ENCODE measurements at regions of chr15 and their contacts with region 1.

Region 1: DNA sequence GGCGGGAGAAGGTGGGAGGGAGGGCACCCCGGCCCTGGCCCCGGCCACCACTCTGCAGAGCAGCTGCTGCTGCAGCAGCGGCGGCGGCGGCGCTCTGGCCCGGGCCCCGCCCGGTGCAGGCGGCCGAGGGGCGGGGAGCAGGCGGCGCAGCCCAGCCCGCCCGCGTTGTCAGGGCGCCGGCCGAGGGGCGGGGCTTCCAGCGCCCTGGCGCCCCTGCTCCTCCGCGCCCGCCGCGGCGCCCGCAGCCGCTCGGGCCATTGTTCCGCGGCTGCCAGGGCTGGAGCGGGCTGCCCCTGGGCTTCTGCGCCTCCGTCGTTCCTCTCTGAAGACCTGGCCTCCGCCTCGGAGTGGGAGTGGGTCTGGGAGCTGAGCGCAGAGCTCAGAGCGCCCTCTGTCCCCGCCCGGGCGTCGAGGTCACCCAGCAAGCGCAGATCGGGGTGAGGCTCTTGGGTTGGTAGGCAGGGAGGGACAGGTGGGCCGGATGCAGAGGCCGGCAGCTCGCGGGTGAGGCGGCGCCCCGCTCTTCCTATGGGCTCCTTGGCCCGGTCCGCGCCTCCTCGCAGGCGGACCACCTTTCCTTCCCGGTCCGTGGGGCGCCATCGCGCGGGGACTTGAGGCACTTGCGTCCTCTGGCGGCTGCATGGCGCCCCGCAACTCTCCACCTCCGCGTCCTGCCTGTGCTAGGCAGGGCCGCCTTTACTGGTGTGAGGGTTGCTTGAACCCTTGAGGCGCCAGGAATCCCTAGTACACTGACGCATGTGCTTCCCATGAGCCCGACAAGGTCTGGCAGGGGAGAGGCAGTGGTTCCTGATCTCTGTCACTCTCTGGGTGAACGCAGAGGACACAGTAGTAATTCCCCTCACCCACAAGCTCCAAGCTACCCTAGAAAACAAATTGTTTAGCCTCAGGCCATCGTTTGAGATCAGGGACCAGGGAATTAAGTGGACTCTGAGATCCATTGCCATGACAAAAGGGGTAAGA is at the start of gene LPCAT4:
- DNase-seq: peak; percentile 89 to 93 (median 92)
- H3K4me3 ChIP-seq: peak within 1 kb of the TSS; percentile 86 to 94
- H3K4me3 Mint-ChIP-seq: peak within 1 kb of the TSS; percentile 94 to 99 (median 97)
- H3K27ac ChIP-seq: peak within 1 kb of the TSS; percentile 87
- H3K27ac Mint-ChIP-seq: peak within 1 kb of the TSS; percentile 94 to 97 (median 96)
- H3K4me1 ChIP-seq: peaks cover 31% of the 10 kb centered on the region
- H3K4me1 Mint-ChIP-seq: peaks cover 27 to 57% (median 38%) of the 10 kb centered on the region in 4 donors
- H3K27me3 ChIP-seq: no peaks in the 10 kb centered on the region
- H3K27me3 Mint-ChIP-seq: no peaks in the 10 kb centered on the region
- total RNA-seq, gene LPCAT4: 100 to 108 TPM

Region 2: GRCh38 chr15:34101366-34102175 is 265.8 kb before region 1 on chr15 and contains the starts of genes EMC7 and PGBD4:
- CTCF ChIA-PET with region 1: interaction called, 5 read pairs
- POLR2A ChIA-PET with region 1: interaction called, 18 read pairs
- intact Hi-C with region 1: loop called (anchors 1 kb)
- DNase-seq: peak; percentile 99 to 100 (median 99)
- H3K4me3 ChIP-seq: peak within 1 kb of the TSS; percentile 94 to 97
- H3K4me3 Mint-ChIP-seq: peak within 1 kb of the TSS; percentile 92 to 100 (median 100)
- H3K27ac ChIP-seq: peak within 1 kb of the TSS; percentile 85
- H3K27ac Mint-ChIP-seq: peak within 1 kb of the TSS; percentile 94 to 100 (median 99)
- H3K4me1 ChIP-seq: peaks cover 37% of the 10 kb centered on the region
- H3K4me1 Mint-ChIP-seq: peaks cover 16 to 52% (median 36%) of the 10 kb centered on the region in 4 donors
- H3K27me3 ChIP-seq: no peaks in the 10 kb centered on the region
- H3K27me3 Mint-ChIP-seq: peaks cover 0 to 1% of the 10 kb centered on the region in 2 donors
- total RNA-seq, gene EMC7: 38.3 to 47.8 TPM
- total RNA-seq, gene PGBD4: 4.7 to 4.9 TPM

Region 3: GRCh38 chr15:34223904-34224596 is 143.3 kb before region 1 on chr15:
- CTCF ChIA-PET with region 1: interaction called, 3 read pairs
- POLR2A ChIA-PET with region 1: interaction called, 14 read pairs
- intact Hi-C with region 1: no loop called
- DNase-seq: no peak
- H3K4me3 ChIP-seq: peak overlapping the region; percentile 88 to 93
- H3K4me3 Mint-ChIP-seq: peak overlapping the region; percentile 90 to 99 (median 96)
- H3K27ac ChIP-seq: peak overlapping the region; percentile 89
- H3K27ac Mint-ChIP-seq: peak overlapping the region; percentile 92 to 100 (median 99)
- H3K4me1 ChIP-seq: peaks cover 25% of the 10 kb centered on the region
- H3K4me1 Mint-ChIP-seq: peaks cover 21 to 32% (median 25%) of the 10 kb centered on the region in 4 donors
- H3K27me3 ChIP-seq: no peaks in the 10 kb centered on the region
- H3K27me3 Mint-ChIP-seq: peaks cover 3% of the 10 kb centered on the region in 2 donors

Region 4: DNA sequence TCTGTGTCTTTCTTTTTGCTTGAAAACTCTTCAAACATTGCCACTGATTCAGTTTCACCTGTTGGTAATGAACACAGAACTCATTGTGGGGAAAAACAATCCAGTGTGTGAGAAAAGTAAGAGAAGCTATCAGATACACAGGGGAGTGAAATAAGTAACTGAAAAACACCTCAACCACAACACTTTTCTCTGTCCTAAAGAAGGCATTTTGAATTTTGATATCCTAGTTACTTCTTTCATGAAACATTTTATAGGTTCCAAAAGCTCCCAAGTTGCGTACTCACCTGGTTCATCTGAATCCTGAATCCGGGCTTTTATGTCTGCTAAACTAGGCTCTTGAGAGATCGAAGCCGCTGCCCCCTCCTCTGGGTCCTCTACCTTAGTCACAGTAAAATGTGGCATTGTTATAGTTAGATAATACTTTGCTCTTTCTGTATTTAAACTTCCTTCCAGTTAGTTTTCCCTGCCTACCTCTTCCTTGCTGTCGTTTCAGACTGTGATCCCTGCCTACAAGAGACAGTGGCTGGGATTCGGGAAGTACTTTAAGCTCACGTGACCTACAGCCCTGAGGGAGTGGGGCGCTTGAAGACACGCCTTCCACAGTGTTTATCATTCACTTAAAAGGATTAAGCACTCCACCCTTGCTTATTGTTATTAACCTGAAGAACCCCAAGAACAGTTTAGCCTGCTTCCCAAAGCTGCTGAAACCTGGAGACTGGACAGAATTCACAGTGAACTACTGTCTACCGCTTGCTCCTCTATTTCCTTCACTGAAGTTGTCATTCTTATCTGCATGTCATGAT is 48.9 kb before region 1 on chr15:
- CTCF ChIA-PET with region 1: interaction called, 4 read pairs
- POLR2A ChIA-PET with region 1: interaction called, 12 read pairs
- intact Hi-C with region 1: no loop called
- DNase-seq: peak in 4 of 5 donors; percentile 12 to 50 (median 22)
- H3K4me3 ChIP-seq: peak overlapping the region; percentile 52 to 55
- H3K4me3 Mint-ChIP-seq: peak overlapping the region; percentile 93 to 99 (median 98)
- H3K27ac ChIP-seq: peak overlapping the region; percentile 49
- H3K27ac Mint-ChIP-seq: peak overlapping the region; percentile 65 to 96 (median 94)
- H3K4me1 ChIP-seq: peaks cover 31% of the 10 kb centered on the region
- H3K4me1 Mint-ChIP-seq: peaks cover 31 to 45% (median 38%) of the 10 kb centered on the region in 4 donors
- H3K27me3 ChIP-seq: no peaks in the 10 kb centered on the region
- H3K27me3 Mint-ChIP-seq: no peaks in the 10 kb centered on the region

Region 5: DNA sequence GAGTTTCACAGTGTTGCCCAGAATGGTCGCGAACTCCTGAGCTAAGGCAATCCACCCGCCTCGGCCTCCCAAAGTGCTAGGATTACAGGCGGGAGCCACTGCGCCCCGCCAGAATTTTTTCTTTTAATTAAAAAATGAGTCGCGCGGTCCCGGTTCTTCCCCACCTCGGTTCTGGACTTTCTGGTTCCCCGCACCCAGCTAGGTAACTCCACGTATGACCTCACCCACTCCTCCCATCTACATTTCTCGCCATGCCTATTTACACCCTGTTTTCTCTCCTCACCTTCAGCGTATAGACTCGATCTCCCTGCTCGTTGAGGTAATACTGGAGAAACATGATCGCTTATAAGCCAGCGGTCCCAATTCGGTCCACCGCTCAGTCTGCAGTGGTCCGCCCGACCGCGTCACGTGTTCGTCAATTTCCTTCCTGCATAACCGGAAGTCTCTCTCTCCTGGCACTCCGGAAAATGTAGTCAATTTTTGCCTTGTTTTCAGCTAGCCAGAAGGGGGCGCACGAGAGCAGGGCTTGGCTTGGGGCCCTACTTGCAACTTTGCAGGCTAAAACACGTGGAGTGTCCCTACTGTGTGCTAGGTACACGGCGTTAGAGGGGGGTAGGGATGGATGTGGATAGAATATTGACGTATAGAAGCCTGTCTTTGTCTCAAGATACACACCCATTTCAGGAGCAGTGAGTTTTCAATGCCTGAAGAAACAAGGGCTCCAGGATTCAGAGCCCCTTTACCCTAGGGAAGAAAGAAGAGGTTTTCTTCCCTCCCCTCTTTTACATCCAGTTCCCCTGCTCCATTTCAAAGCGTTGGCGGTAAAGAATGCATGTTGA is 24.4 kb before region 1 on chr15 and contains the starts of genes NOP10 and NUTM1:
- CTCF ChIA-PET with region 1: interaction called, 111 read pairs
- POLR2A ChIA-PET with region 1: interaction called, 144 read pairs
- intact Hi-C with region 1: loop called (anchors 1 kb)
- DNase-seq: peak; percentile 91 to 93 (median 92)
- H3K4me3 ChIP-seq: peak within 1 kb of the TSS; percentile 54 to 96
- H3K4me3 Mint-ChIP-seq: peak within 1 kb of the TSS in 2 of 8 donors; percentile 87
- H3K27ac ChIP-seq: peak within 1 kb of the TSS; percentile 73
- H3K27ac Mint-ChIP-seq: peak within 1 kb of the TSS in 5 of 7 donors; percentile 77 to 93 (median 88)
- H3K4me1 ChIP-seq: peaks cover 28% of the 10 kb centered on the region
- H3K4me1 Mint-ChIP-seq: peaks cover 14 to 31% (median 17%) of the 10 kb centered on the region in 4 donors
- H3K27me3 ChIP-seq: no peaks in the 10 kb centered on the region
- H3K27me3 Mint-ChIP-seq: no peaks in the 10 kb centered on the region
- total RNA-seq, gene NOP10: 73.5 to 77.2 TPM
- total RNA-seq, gene NUTM1: not detected

Region 6: GRCh38 chr15:34987985-34988873 is 620.8 kb after region 1 on chr15 and contains the start of gene ZNF770:
- CTCF ChIA-PET with region 1: no interaction called
- POLR2A ChIA-PET with region 1: interaction called, 10 read pairs
- intact Hi-C with region 1: loop called (anchors 10 kb)
- DNase-seq: peak; percentile 76 to 88 (median 85)
- H3K4me3 ChIP-seq: peak within 1 kb of the TSS; percentile 97 to 100
- H3K4me3 Mint-ChIP-seq: peak within 1 kb of the TSS; percentile 94 to 100 (median 98)
- H3K27ac ChIP-seq: peak within 1 kb of the TSS; percentile 96
- H3K27ac Mint-ChIP-seq: peak within 1 kb of the TSS; percentile 98 to 100 (median 99)
- H3K4me1 ChIP-seq: peaks cover 47% of the 10 kb centered on the region
- H3K4me1 Mint-ChIP-seq: peaks cover 29 to 54% (median 38%) of the 10 kb centered on the region in 4 donors
- H3K27me3 ChIP-seq: no peaks in the 10 kb centered on the region
- H3K27me3 Mint-ChIP-seq: peaks cover 0 to 3% of the 10 kb centered on the region in 2 donors
- total RNA-seq, gene ZNF770: 55.8 to 63.5 TPM

Measured in CD4-positive, alpha-beta memory T cell (primary cell).